ENCODE measurements at regions of chr5 and their contacts with region 1.

Region 1: DNA sequence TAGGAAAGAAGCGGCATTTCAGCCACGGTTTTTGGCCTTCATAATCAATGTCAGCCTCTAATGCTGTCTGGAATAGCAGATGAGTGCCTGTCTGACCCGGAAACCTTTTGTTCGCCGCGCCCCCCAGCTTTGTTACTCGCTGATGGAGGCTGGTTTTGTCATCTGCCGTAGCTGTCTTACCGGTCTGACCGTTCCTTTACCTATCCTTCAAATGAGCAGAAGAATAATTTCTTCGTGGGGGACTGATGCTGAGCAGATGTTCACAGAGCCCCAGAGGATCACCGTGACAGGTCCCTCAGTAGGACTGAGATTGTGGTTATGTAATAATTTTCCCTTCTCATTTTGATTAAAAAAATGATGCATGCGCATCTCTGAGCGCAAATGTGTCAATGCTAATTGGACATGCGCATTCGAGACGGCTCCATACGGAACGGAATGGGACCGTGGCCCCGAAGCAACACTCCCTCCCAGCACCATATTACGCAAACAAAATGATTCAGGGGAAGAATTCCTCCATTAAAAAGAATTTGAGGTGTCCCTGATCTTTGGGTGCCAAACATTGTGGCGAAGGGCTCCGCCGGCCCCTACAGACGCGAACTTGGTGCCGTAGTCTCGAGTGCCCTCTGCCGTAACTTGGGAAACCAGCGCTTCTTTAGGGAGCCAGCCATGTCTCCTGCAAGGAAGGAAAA is 27.6 kb downstream of the TLX3 start:
- DNase-seq: peak; percentile 51
- ATAC-seq: peak; percentile 79 to 84

Region 2: DNA sequence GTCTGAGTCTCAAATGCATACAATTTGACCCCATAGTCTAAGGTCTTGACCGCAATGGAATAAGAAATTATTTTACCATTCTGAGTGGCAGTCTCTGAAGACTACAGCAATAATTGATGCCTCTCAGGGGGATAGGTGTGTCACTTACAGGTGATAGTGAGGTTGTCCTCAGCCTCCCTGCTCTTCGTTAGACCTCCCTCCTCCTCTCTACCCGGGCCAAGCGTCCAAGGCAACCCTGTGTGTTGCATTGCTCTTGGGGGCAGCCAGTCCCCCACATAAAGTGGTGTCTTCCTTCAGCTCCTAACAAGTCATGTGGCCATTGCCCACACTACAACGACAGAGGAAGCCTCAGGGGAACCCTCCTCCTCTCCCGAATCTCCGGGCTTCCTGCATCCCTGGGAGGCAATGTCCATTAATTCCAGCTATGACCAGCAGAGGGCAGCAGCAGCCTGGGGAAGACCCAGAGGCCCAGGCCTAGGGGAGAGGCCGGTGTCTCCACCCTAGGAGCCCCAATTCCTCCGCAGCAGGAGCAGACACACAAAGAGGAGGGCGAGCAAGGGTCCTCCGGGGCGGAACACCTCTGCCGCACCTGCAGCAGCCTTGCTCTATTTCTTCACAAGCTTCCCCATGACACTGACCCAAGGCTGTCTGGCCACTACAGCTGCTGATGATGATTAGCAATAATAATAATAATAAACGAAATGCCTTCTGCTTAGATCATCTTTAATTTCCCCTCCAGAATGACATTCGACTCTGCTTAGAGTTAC is 698.0 kb before region 1 on chr5:
- intact Hi-C with region 1: loop called in 1 of 2 experiments (anchors 5 kb)
- DNase-seq: peak; percentile 68
- ATAC-seq: peak; percentile 59 to 65

Region 3: DNA sequence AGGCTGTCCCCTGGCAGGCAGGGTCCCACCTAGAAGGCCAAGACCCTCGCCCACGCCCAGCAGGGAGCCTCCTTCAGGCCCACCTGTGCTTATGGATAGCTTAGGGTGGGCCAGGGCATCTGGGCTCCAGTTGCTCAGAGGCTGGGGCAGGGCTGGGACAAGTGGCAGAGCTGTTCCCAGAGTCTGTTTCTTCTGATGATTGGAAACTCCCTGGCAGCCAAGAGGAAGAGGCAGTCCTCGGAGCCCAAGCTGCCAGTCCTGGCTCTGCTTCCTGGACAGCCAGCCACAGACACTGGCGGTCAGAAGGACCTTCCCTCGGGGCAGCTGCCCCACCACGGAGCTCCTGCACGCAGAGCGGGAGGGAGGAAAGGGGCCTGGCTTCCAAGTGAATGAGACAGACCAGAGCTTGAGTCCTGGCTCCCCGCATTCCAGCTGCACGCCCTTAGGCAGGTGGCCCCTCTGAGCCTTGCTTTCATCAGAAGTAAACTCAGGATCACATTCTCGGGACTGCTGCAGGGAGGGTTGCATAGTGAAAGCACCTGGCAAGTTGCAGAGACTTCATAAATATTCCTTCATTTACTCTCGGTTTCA is 591.1 kb before region 1 on chr5:
- intact Hi-C with region 1: loop called in 1 of 2 experiments (anchors 5 kb)
- DNase-seq: peak; percentile 40
- ATAC-seq: peak; percentile 57 to 66

Region 4: GRCh38 chr5:171192111-171192510 is 144.6 kb before region 1 on chr5:
- intact Hi-C with region 1: no loop called
- DNase-seq: no peak
- ATAC-seq: no peak

Region 5: GRCh38 chr5:171207256-171207847 is 129.3 kb before region 1 on chr5:
- intact Hi-C with region 1: loop called (anchors 2 to 10 kb)
- DNase-seq: no peak
- ATAC-seq: no peak

Region 6: DNA sequence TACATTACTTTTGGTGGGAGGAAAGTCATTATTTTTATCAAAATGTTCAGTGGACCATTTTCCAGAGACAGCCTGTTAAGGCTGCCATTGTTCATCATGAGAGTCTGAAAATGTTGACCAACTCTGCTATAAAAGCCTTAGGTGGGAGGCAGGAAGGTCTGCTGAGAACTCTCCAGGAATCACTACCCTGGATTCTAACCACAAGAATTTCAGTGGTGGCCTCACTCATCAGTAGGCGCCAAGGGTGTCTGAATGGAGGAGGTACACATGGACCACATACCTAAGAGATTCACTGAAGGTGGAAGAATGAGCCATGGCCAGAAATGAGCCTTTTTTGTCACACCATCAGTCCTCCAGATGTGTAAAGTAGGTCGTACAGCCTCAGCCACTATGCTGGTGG is 48.6 kb before region 1 on chr5:
- intact Hi-C with region 1: no loop called
- DNase-seq: no peak
- ATAC-seq: no peak

Region 7: GRCh38 chr5:171371326-171371725 is 34.7 kb after region 1 on chr5:
- intact Hi-C with region 1: no loop called
- DNase-seq: no peak
- ATAC-seq: no peak

Measured in left cardiac atrium (tissue), 4 donors.